GM12878 (cell line): ENCODE measurements at regions of chr9 and their contacts with region 1.

Region 1: DNA sequence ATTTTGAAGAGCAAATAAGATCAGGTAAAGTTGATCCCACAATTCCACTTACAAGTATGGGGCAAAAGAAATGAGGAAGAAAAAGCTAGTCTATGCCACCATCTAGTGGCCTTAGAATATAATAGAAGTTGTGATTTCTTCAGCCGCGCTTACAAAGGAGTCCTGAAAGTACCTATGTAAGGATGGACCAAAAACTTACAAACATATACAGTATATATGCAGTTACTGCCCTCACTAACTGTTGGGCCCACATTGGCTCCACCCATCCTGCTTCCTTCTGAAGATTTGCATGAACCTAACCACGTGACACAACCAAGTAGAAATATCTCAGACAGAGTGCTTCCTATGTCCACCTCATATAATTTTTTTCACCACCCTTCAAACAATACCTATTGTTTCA is 11.7 kb upstream of the OR13D1 start:
- DNase-seq: peak; percentile 7
- ATAC-seq: peak; percentile 88
- H3K4me3 ChIP-seq: no peak overlapping the region
- H3K27ac ChIP-seq: no peak overlapping the region
- H3K4me1 ChIP-seq: no peaks in the 10 kb centered on the region
- H3K27me3 ChIP-seq: no peaks in the 10 kb centered on the region
- CTCF ChIP-seq: peak; percentile 24 to 74 (median 37); a peak in 4 of 6 replicates
- EP300 ChIP-seq: no peak
- POLR2A ChIP-seq: no peak
- RAD21 ChIP-seq: peak; percentile 74

Region 2: GRCh38 chr9:103397868-103398600 is 1284.6 kb before region 1 on chr9:
- CTCF ChIA-PET with region 1: no interaction called
- POLR2A ChIA-PET with region 1: no interaction called
- RAD21 ChIA-PET with region 1: no interaction called
- SMC1A ChIA-PET with region 1: no interaction called
- in situ Hi-C with region 1: no loop called
- intact Hi-C with region 1: loop called (anchors 5 kb)
- DNase-seq: no peak
- ATAC-seq: peak; percentile 88
- H3K4me3 ChIP-seq: no peak overlapping the region
- H3K27ac ChIP-seq: no peak overlapping the region
- H3K4me1 ChIP-seq: no peaks in the 10 kb centered on the region
- H3K27me3 ChIP-seq: no peaks in the 10 kb centered on the region
- CTCF ChIP-seq: peak; percentile 71 to 72 (median 71); a peak in 5 of 6 replicates
- EP300 ChIP-seq: no peak
- POLR2A ChIP-seq: no peak
- RAD21 ChIP-seq: peak; percentile 64

Region 3: DNA sequence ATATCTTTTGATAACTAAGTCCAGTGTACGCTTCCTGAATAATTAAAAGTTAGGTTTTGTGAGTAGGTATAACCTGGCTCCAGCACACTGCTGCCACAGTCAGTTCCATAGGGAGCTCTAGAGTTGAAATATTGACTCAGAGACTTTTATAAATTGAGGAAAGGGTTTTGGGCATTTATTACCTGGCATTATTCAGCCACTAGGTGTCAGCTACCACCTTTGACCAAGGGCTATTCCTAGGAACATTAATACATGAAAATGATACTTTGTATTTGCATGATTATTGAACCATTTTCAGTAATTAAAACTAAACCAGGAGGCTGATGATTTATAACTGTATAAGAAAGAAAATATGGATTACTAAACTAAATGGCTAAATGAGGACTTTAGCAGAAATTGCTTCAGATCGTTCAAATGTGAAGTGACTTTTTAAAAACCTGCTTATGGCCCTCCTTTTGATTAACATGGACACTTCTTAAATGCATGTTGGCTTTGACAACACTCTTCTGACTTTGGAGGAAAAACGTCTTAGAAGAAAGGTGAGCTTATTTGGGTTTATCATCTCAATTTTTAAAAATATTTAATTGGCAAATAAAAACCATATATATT is 505.5 kb before region 1 on chr9:
- CTCF ChIA-PET with region 1: interaction called, 7 read pairs
- POLR2A ChIA-PET with region 1: no interaction called
- RAD21 ChIA-PET with region 1: no interaction called
- SMC1A ChIA-PET with region 1: interaction called, 4 read pairs
- in situ Hi-C with region 1: no loop called
- intact Hi-C with region 1: loop called (anchors 1 kb)
- DNase-seq: no peak
- ATAC-seq: peak; percentile 87
- H3K4me3 ChIP-seq: no peak overlapping the region
- H3K27ac ChIP-seq: no peak overlapping the region
- H3K4me1 ChIP-seq: 0 out of 2 replicates have a peak, but pooled peaks cover 2% of the 10 kb centered on the region
- H3K27me3 ChIP-seq: no peaks in the 10 kb centered on the region
- CTCF ChIP-seq: peak; percentile 36 to 51 (median 41); a peak in 4 of 6 replicates
- EP300 ChIP-seq: no peak
- POLR2A ChIP-seq: no peak
- RAD21 ChIP-seq: peak; percentile 51

Region 4: DNA sequence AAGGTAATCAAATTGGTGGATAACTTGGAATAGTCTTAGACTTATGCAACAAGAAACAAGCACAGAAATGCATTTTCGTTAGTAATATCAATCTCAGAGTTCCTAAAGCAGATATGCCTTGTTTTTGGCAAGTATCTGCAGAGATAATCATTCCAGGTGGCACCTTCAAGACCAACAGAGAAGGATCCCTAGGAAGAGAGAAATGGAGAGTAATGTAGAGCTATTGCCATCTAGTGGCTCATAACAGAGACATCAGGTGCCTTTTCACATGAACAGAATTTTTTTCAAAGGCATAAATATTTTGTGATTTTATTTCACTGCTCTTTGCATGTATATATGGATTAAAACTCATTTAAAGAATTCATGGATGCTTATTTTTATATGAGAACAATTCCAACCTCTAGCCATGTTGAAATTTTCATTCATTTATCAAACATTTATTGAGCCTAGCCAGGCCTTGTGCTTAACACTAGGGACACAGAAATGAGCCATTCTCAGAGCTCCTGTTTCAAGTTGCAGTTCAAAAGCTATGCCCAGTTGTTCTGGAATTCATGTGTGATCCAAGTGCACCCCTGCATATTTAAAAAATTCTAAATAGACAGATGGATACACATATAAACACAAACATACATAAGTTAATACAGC is 296.1 kb before region 1 on chr9:
- CTCF ChIA-PET with region 1: no interaction called
- POLR2A ChIA-PET with region 1: no interaction called
- RAD21 ChIA-PET with region 1: no interaction called
- SMC1A ChIA-PET with region 1: interaction called, 3 read pairs
- in situ Hi-C with region 1: no loop called
- intact Hi-C with region 1: loop called (anchors 5 kb)
- DNase-seq: no peak
- ATAC-seq: peak; percentile 74
- H3K4me3 ChIP-seq: no peak overlapping the region
- H3K27ac ChIP-seq: no peak overlapping the region
- H3K4me1 ChIP-seq: no peaks in the 10 kb centered on the region
- H3K27me3 ChIP-seq: no peaks in the 10 kb centered on the region
- CTCF ChIP-seq: peak; percentile 55 to 66 (median 64); a peak in 5 of 6 replicates
- EP300 ChIP-seq: no peak
- POLR2A ChIP-seq: no peak
- RAD21 ChIP-seq: peak; percentile 76

Region 5: GRCh38 chr9:104494808-104495207 is 187.8 kb before region 1 on chr9:
- CTCF ChIA-PET with region 1: interaction called, 11 read pairs
- POLR2A ChIA-PET with region 1: no interaction called
- RAD21 ChIA-PET with region 1: interaction called, 6 read pairs
- SMC1A ChIA-PET with region 1: interaction called, 4 read pairs
- in situ Hi-C with region 1: no loop called
- intact Hi-C with region 1: loop called (anchors 2 kb)
- DNase-seq: no peak
- ATAC-seq: peak; percentile 45; the same call in 2 of the 3 replicates
- H3K4me3 ChIP-seq: no peak overlapping the region
- H3K27ac ChIP-seq: no peak overlapping the region
- H3K4me1 ChIP-seq: no peaks in the 10 kb centered on the region
- H3K27me3 ChIP-seq: no peaks in the 10 kb centered on the region; a peak in 1 of 4 replicates
- CTCF ChIP-seq: peak; percentile 5 to 31 (median 6); a peak in 1 of 6 replicates
- EP300 ChIP-seq: no peak
- POLR2A ChIP-seq: no peak
- RAD21 ChIP-seq: peak; percentile 46

Region 6: DNA sequence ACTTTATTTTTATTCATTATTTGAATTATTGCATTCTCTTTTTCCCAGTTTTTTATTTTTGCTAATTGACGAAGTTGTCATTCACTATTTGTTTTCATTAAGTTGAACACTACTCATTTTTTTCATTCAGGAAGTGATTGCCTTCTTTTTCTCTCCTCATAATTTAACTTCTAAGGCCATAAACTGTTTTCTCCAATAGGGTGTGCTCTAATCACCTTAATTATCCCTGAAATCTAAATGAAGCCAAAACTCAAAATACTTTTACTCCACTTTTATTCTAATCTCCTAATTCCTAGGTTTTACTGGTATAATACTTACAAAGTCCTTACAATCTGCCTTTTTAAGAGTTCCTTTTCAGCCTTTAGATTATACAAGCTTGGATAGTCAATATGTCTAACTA is 74.3 kb before region 1 on chr9:
- CTCF ChIA-PET with region 1: interaction called, 4 read pairs
- POLR2A ChIA-PET with region 1: no interaction called
- RAD21 ChIA-PET with region 1: no interaction called
- SMC1A ChIA-PET with region 1: no interaction called
- in situ Hi-C with region 1: no loop called
- intact Hi-C with region 1: loop called (anchors 5 kb)
- DNase-seq: no peak
- ATAC-seq: no peak
- H3K4me3 ChIP-seq: no peak overlapping the region
- H3K27ac ChIP-seq: no peak overlapping the region
- H3K4me1 ChIP-seq: no peaks in the 10 kb centered on the region
- H3K27me3 ChIP-seq: no peaks in the 10 kb centered on the region
- CTCF ChIP-seq: no peak; a peak in 1 of 6 replicates
- EP300 ChIP-seq: no peak
- POLR2A ChIP-seq: no peak
- RAD21 ChIP-seq: no peak

Region 7: DNA sequence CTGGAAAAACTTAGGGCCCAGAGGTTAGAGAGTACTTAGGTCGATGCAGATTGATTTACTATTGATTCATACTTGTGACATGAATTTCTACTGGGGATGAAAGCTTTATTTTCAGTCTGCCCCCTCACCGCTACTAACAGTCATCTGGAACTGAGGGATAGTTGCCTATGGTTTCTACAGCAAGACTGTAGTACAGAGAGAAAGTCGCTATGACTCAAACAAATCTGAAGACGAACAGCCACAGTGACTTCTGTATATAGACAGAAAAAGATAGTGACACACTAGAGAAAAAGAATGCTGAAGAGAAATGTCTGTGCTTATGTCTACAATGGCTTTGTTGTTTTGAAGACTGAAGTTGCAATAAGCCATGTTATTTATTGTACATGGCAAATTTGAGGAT is 29.0 kb after region 1 on chr9:
- CTCF ChIA-PET with region 1: no interaction called
- POLR2A ChIA-PET with region 1: no interaction called
- RAD21 ChIA-PET with region 1: no interaction called
- SMC1A ChIA-PET with region 1: no interaction called
- in situ Hi-C with region 1: no loop called
- intact Hi-C with region 1: no loop called
- DNase-seq: no peak
- ATAC-seq: peak; percentile 47
- H3K4me3 ChIP-seq: no peak overlapping the region
- H3K27ac ChIP-seq: no peak overlapping the region
- H3K4me1 ChIP-seq: no peaks in the 10 kb centered on the region
- H3K27me3 ChIP-seq: no peaks in the 10 kb centered on the region
- CTCF ChIP-seq: no peak
- EP300 ChIP-seq: no peak
- POLR2A ChIP-seq: no peak
- RAD21 ChIP-seq: no peak